Activated CD4-positive, alpha-beta T cell treated with anti-CD3 and anti-CD28 coated beads, Interleukin-2, amount 10 ng/mL, durations not matched to agents 24 days and 14 days (primary cell): ENCODE measurements at regions of chr3 and their contacts with region 1.

Region 1: GRCh38 chr3:18740631-18741583 is 315.8 kb upstream of the SATB1 start:
- DNase-seq: peak; percentile 90
- H3K4me3 Mint-ChIP-seq: peak overlapping the region; percentile 63
- H3K27ac Mint-ChIP-seq: peak overlapping the region; percentile 91
- H3K4me1 Mint-ChIP-seq: peaks cover 78% of the 10 kb centered on the region
- H3K27me3 Mint-ChIP-seq: no peaks in the 10 kb centered on the region

Region 2: GRCh38 chr3:18402239-18402799 is 338.6 kb before region 1 on chr3:
- intact Hi-C with region 1: loop called (anchors 1 kb)
- DNase-seq: peak; percentile 63
- H3K4me3 Mint-ChIP-seq: peak overlapping the region; percentile 74
- H3K27ac Mint-ChIP-seq: peak overlapping the region; percentile 84
- H3K4me1 Mint-ChIP-seq: peaks cover 86% of the 10 kb centered on the region
- H3K27me3 Mint-ChIP-seq: no peaks in the 10 kb centered on the region

Region 3: GRCh38 chr3:18559331-18559842 is 181.5 kb before region 1 on chr3:
- intact Hi-C with region 1: loop called (anchors 1 kb)
- DNase-seq: peak; percentile 80
- H3K4me3 Mint-ChIP-seq: peak overlapping the region; percentile 64
- H3K27ac Mint-ChIP-seq: peak overlapping the region; percentile 97
- H3K4me1 Mint-ChIP-seq: peaks cover 65% of the 10 kb centered on the region
- H3K27me3 Mint-ChIP-seq: no peaks in the 10 kb centered on the region

Region 4: GRCh38 chr3:18717598-18717997 is 23.3 kb before region 1 on chr3:
- intact Hi-C with region 1: loop called (anchors 1 kb)
- DNase-seq: peak; percentile 64
- H3K4me3 Mint-ChIP-seq: peak overlapping the region; percentile 56
- H3K27ac Mint-ChIP-seq: peak overlapping the region; percentile 95
- H3K4me1 Mint-ChIP-seq: peaks cover 56% of the 10 kb centered on the region
- H3K27me3 Mint-ChIP-seq: no peaks in the 10 kb centered on the region

Region 5: DNA sequence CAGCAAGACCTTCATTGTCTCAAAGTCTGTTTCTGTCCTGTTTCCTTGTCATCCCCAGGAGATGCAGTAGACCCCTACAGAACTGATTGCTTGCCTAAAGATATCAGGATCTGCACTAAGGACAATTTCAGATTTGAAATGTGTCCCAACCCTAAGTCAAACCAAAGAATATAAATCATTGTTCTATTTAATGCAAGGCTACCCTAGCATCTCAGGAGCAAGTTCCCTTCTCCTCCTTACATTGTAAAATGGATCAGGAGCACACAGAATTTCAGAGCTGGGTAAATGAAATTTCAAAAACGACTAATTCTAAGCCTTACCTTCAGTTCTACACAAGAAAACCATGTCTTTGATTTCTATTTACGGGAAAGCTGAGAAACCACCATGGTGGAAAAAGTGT is 46.5 kb after region 1 on chr3:
- intact Hi-C with region 1: loop called (anchors 2 kb)
- DNase-seq: no peak
- H3K4me3 Mint-ChIP-seq: no peak overlapping the region
- H3K27ac Mint-ChIP-seq: no peak overlapping the region
- H3K4me1 Mint-ChIP-seq: peaks cover 6% of the 10 kb centered on the region
- H3K27me3 Mint-ChIP-seq: peaks cover 2% of the 10 kb centered on the region

Region 6: GRCh38 chr3:19074257-19074900 is 333.5 kb after region 1 on chr3:
- intact Hi-C with region 1: no loop called
- DNase-seq: no peak
- H3K4me3 Mint-ChIP-seq: no peak overlapping the region
- H3K27ac Mint-ChIP-seq: no peak overlapping the region
- H3K4me1 Mint-ChIP-seq: no peaks in the 10 kb centered on the region
- H3K27me3 Mint-ChIP-seq: peaks cover 1% of the 10 kb centered on the region